ENCODE measurements at regions of chr16 and their contacts with region 1.

Region 1: DNA sequence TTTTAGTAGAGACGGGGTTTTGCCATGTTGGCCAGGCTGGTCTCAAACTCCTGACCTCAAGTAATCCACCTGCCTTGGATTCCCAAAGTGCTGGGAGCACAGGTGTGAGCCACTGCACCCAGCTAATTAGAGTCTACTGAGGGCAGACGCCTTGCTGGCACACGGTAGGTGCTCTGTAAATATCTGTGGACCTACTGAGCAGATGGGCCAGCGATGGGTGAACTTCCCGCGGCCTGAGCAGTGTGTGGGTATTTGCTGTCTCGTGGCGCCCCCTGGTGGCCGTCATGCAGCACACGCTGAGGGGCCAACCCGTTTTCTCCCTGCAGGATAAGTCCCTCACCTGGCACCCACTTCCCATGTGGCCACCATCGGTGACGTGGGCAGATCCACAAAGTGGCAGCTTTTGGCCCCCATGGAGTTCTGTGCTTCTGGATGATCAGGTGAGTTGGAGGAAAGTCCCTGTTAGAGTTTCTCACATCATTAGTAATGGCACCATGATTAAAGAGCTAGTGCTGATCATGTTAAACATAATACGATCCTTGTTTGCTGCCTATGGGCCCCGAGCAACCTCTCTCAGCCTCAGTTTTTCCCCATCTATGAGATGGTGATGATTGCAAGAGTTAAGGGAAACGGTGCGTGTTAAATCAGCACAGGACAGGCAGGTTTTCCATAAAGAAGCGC is 40.7 kb downstream of the ZDHHC7 start:
- DNase-seq: peak; percentile 16
- H3K4me3 ChIP-seq: no peak overlapping the region
- CTCF ChIP-seq: peak; percentile 87

Region 2: GRCh38 chr16:84738255-84739038 is 232.1 kb before region 1 on chr16:
- CTCF ChIA-PET with region 1: interaction called, 124 read pairs
- POLR2A ChIA-PET with region 1: no interaction called
- DNase-seq: no peak
- H3K4me3 ChIP-seq: no peak overlapping the region
- CTCF ChIP-seq: peak; percentile 82

Region 3: GRCh38 chr16:84765616-84766580 is 204.7 kb before region 1 on chr16:
- CTCF ChIA-PET with region 1: interaction called, 475 read pairs
- POLR2A ChIA-PET with region 1: no interaction called
- DNase-seq: no peak
- H3K4me3 ChIP-seq: no peak overlapping the region
- CTCF ChIP-seq: no peak

Region 4: GRCh38 chr16:84947022-84947421 is 23.6 kb before region 1 on chr16:
- CTCF ChIA-PET with region 1: interaction called, 184 read pairs
- POLR2A ChIA-PET with region 1: no interaction called
- DNase-seq: no peak
- H3K4me3 ChIP-seq: no peak overlapping the region
- CTCF ChIP-seq: no peak

Region 5: DNA sequence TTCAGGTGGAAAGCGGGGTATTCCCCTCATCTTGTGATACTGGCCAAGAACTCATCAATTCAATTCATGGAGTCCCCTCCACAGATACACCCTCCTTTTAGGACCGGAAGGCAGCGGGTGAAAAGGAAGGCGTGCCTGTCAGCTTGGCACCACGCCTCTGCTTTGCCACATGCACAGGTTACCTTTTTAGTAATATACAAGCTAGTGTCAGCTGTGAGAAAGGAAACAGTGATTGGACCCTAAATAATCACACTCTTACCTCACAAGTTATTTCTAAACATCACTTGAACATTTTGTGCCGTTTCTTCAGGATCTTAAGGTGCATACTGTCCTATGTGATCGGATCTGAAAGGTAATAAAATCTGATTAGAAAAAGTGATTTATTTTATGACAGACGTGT is 25.1 kb after region 1 on chr16:
- CTCF ChIA-PET with region 1: interaction called, 11 read pairs
- POLR2A ChIA-PET with region 1: no interaction called
- DNase-seq: no peak
- H3K4me3 ChIP-seq: no peak overlapping the region
- CTCF ChIP-seq: no peak

Region 6: GRCh38 chr16:85046931-85047866 is 76.6 kb after region 1 on chr16:
- CTCF ChIA-PET with region 1: no interaction called
- POLR2A ChIA-PET with region 1: no interaction called
- DNase-seq: no peak
- H3K4me3 ChIP-seq: no peak overlapping the region
- CTCF ChIP-seq: no peak

Region 7: DNA sequence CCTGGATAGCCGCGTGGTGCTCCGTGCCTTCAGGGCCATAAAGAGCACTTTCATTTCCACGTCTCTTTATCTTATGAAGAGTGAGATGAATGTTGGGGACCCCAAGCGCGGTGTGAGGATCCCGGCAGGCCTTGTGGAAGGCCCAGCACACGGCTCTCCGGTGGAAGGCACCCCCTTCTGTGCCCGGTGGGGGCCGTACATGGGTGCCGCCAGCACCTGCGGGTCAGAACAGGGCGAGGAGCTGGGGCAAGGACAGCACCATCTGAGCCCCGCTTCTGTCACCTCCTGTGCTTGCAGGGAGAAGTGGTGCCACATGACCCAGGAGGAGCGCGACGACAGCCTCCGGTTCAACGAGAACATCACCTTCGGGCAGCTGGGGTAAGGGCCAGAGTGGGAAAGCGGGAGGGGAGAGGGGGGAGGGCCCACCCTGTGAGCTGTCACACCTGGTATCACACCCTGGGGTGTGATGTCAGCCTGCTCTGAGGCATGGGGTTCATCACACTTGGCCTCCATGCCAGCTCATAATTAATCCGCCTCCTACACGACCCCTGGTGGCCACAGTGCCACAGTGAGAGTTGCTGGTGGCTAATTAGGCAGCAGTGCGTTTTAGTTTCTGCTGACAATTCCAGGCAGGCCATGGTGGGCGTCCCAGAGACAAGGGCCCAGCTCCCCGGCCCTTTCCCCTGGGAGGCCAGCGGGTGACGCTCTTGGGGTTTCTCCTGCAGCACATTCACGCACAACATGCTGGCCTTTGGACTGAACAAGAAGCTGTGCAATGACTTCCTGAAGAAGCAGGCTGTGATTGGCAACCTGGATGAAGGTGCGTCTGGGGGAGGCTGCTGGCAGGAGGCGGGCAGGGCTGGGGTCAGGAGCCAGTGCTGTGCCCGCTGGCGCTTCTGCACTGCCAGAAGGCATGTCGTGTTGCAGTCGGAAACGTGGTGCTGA is 116.0 kb after region 1 on chr16:
- CTCF ChIA-PET with region 1: interaction called, 20 read pairs
- POLR2A ChIA-PET with region 1: no interaction called
- DNase-seq: no peak
- H3K4me3 ChIP-seq: no peak overlapping the region
- CTCF ChIP-seq: peak; percentile 56

Measured in AG04449 (cell line).